ENCODE measurements at regions of chr16 and their contacts with region 1.

Region 1: GRCh38 chr16:47774661-47775060 is 313.5 kb downstream of the PHKB start:
- ATAC-seq: no peak
- H3K4me3 ChIP-seq: no peak overlapping the region
- H3K27ac ChIP-seq: no peak overlapping the region
- H3K4me1 ChIP-seq: peaks cover 2 to 13% of the 10 kb centered on the region in 2 donors

Region 2: GRCh38 chr16:46649928-46650623 is 1124.6 kb before region 1 on chr16:
- in situ Hi-C with region 1: no loop called
- ATAC-seq: peak; percentile 9 to 94 (median 50)
- H3K4me3 ChIP-seq: no peak overlapping the region
- H3K27ac ChIP-seq: peak overlapping the region in 1 of 2 donors; percentile 37
- H3K4me1 ChIP-seq: peaks cover 5 to 12% of the 10 kb centered on the region in 2 donors

Region 3: DNA sequence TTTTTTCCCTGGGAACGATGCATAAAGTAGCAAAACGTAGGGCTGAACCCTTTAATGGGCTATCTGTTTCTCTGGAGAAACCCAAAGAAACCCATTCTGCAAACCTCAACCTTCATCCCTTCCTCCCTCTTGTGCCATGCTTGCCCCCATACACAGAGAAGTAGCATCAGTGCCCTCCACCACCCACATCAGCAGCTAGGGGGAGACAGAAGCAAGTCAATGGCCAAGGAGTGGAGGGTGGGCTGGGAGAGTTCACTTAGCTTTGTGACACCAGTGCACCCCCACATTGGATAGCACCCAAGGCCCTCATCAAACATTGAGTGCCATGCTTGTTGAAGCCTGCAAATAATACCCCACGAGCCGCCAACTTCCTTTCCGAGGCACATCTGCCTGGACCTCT is 98.8 kb after region 1 on chr16:
- in situ Hi-C with region 1: loop called in 1 of 9 experiments (anchors 25 kb)
- ATAC-seq: no peak
- H3K4me3 ChIP-seq: no peak overlapping the region
- H3K27ac ChIP-seq: no peak overlapping the region
- H3K4me1 ChIP-seq: peaks cover 0 to 12% of the 10 kb centered on the region in 2 donors